Right cardiac atrium (tissue), 5 donors: ENCODE measurements at regions of chr19 and their contacts with region 1.

Region 1: GRCh38 chr19:47697863-47698609 is 15.2 kb upstream of the EHD2 start:
- DNase-seq: peak; percentile 76 to 88 (median 87)
- ATAC-seq: peak; percentile 76 to 78
- H3K4me3 ChIP-seq: no peak overlapping the region
- H3K27ac ChIP-seq: peak overlapping the region; percentile 1
- H3K4me1 ChIP-seq: no peaks in the 10 kb centered on the region
- H3K27me3 ChIP-seq: no peaks in the 10 kb centered on the region

Region 2: DNA sequence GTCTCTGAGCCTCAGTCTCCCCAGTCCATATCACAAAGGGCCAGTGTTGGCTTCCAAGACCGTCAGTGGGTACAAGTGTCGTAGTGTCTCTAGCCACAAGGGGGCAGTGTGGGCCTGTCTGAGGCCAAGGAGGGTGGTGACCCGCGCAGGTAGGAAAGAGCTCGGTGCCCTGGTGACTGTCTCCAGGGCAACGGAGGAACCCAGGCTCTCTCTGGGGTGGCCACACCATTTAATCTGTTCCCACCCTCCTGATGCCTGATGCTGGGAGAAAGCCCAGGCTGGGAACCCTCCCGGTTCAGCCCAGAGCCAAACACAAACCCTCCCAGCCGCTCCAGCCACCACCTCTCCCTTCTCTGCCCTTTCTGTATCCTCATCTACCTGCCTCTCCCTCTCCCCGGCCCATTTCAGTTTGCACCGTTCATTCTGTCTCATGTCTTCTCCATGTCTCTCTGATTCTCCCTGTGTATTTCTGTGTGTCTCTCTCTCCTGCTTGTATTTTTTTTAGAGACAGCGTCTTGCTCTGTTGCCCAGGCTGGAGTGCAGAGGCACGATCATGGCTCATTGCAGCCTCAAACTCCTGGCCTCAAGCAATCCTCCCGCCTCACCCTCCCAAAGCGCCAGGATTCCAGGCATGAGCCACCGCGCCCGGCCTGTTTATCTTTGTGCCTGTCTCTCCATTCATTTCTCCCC is 261.2 kb before region 1 on chr19:
- intact Hi-C with region 1: loop called in 3 of 4 experiments (anchors 2 to 5 kb)
- DNase-seq: peak; percentile 75 to 88 (median 83)
- ATAC-seq: peak; percentile 83 to 92
- H3K4me3 ChIP-seq: no peak overlapping the region
- H3K27ac ChIP-seq: no peak overlapping the region
- H3K4me1 ChIP-seq: no peaks in the 10 kb centered on the region
- H3K27me3 ChIP-seq: no peaks in the 10 kb centered on the region

Region 3: DNA sequence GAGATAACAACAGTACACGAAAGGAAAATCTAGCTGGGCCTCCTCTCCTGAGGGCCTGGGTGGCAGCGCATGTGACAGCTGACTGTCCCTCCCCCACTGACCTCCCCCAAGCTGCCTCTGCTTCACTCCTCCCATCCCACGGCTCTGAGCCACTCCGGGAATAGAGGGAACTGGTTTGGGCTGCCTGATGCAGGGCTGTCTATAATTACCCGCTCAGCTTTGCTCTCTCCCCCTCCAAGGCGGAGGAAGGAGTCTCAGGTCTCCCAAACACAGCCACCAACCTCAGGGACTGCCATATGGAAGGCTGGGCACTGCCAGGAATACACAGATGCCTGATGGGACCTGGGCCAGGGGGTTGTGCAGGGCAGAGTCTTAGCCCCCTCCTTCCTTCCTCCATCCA is 191.0 kb before region 1 on chr19:
- intact Hi-C with region 1: loop called in 1 of 4 experiments (anchors 10 kb)
- DNase-seq: peak in 1 of 3 donors; percentile 60
- ATAC-seq: peak; percentile 66 to 75
- H3K4me3 ChIP-seq: no peak overlapping the region
- H3K27ac ChIP-seq: peak overlapping the region; percentile 33
- H3K4me1 ChIP-seq: peaks cover 35% of the 10 kb centered on the region
- H3K27me3 ChIP-seq: no peaks in the 10 kb centered on the region

Region 4: GRCh38 chr19:47600246-47601179 is 97.5 kb before region 1 on chr19:
- intact Hi-C with region 1: loop called in 2 of 4 experiments (anchors 5 to 10 kb)
- DNase-seq: peak; percentile 100
- ATAC-seq: peak; percentile 99
- H3K4me3 ChIP-seq: peak overlapping the region; percentile 81
- H3K27ac ChIP-seq: peak overlapping the region; percentile 97
- H3K4me1 ChIP-seq: peaks cover 2% of the 10 kb centered on the region
- H3K27me3 ChIP-seq: no peaks in the 10 kb centered on the region

Region 5: DNA sequence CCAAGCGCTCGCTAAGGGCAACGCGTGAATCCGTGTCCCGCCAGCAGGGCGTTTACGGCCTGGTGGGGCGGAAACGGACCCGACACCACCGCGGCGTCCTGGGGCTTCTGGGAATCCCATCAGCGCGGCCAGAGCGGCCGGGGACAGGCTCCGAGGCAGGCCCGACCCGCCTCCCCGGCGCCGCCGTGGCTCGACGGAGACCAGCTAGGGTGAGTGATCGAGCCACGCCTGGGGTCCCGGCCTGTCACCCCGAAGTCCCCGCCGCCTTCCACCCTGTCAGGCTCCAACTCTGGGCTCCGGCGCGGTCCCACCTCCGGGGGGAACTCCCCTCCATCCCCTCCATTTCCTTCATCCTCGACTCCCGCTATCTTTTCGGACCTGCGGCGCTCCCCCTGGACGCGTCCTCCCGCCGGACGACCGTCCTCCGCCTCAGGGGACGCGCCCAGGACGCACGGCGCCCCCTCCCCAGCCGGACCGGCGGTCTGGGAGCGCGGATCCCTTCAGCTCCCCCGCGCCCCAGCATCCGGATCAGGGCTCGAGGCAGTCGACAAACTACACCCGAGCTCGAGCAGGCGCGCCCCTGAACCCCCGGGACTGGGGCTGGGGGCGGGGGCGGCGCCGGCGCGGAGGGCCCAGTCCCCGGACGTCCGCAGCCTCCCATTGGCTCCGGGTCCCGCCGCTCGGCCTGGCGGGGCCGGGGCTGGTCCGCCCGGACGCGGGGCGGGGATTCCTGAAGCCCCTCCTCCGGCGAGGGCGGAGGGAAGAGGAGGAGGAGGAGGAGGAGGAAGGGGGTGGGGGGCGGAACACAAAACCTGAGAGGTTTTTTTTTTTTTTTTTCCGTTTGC is 89.7 kb before region 1 on chr19:
- intact Hi-C with region 1: loop called in 3 of 4 experiments (anchors 5 to 10 kb)
- DNase-seq: peak; percentile 95 to 99 (median 98)
- ATAC-seq: peak; percentile 96
- H3K4me3 ChIP-seq: peak overlapping the region; percentile 57
- H3K27ac ChIP-seq: peak overlapping the region; percentile 88
- H3K4me1 ChIP-seq: no peaks in the 10 kb centered on the region
- H3K27me3 ChIP-seq: no peaks in the 10 kb centered on the region